ENCODE measurements at regions of chr5 and their contacts with region 1.

Region 1: DNA sequence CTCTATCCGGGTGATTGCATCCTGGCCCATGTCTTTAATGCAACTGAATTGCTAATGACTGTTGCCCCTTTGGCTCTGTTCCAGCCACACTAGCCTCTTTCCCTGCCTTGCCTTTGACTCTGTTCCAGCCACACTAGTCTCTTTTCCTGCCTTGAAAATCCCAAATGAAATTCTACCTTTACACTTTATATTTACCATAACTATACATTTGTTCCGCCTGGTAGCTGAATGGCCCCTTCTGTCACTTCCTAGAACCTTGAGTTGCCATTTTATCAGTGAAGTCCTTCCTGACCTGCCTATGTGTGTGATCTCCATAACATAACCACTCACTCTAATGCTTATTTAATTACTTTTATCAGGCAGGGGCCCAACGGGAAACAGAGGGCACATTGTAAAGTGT is 1120.4 kb upstream of the WWC1 start:
- DNase-seq: no peak
- ATAC-seq: no peak
- H3K4me3 ChIP-seq: no peak overlapping the region
- H3K4me3 Mint-ChIP-seq: no peak overlapping the region
- H3K27ac ChIP-seq: no peak overlapping the region
- H3K27ac Mint-ChIP-seq: no peak overlapping the region
- H3K4me1 ChIP-seq: no peaks in the 10 kb centered on the region
- H3K4me1 Mint-ChIP-seq: no peaks in the 10 kb centered on the region
- H3K27me3 ChIP-seq: no peaks in the 10 kb centered on the region
- H3K27me3 Mint-ChIP-seq: no peaks in the 10 kb centered on the region
- CTCF ChIP-seq: no peak

Region 2: GRCh38 chr5:165349735-165350134 is 1821.3 kb before region 1 on chr5:
- CTCF ChIA-PET with region 1: no interaction called
- POLR2A ChIA-PET with region 1: no interaction called
- intact Hi-C with region 1: loop called in 1 of 2 experiments (anchors 5 kb)
- DNase-seq: no peak
- ATAC-seq: no peak
- H3K4me3 ChIP-seq: no peak overlapping the region
- H3K4me3 Mint-ChIP-seq: no peak overlapping the region
- H3K27ac ChIP-seq: no peak overlapping the region
- H3K27ac Mint-ChIP-seq: no peak overlapping the region
- H3K4me1 ChIP-seq: no peaks in the 10 kb centered on the region
- H3K4me1 Mint-ChIP-seq: no peaks in the 10 kb centered on the region
- H3K27me3 ChIP-seq: no peaks in the 10 kb centered on the region
- H3K27me3 Mint-ChIP-seq: no peaks in the 10 kb centered on the region
- CTCF ChIP-seq: no peak

Region 3: DNA sequence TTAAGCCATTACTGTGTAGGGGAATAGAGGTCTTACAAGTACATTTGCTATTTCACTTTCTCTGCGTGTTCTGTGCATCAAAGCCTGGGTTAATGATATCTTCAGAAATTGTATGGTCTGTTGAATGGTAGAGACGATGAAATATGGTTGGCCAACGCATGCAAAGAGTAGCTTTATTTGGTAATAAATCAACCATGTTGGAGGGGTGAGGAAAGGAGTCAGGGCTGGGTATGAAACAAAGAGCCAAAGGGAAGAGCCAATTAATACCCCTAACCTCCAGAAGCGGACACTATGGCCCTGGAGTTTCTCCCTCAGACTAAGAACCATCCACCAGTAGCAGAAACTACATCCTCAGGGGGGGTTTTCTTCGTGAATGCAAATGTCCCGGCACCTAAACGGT is 853.6 kb before region 1 on chr5:
- CTCF ChIA-PET with region 1: no interaction called
- POLR2A ChIA-PET with region 1: no interaction called
- intact Hi-C with region 1: no loop called
- DNase-seq: no peak
- ATAC-seq: no peak
- H3K4me3 ChIP-seq: no peak overlapping the region
- H3K4me3 Mint-ChIP-seq: no peak overlapping the region
- H3K27ac ChIP-seq: no peak overlapping the region
- H3K27ac Mint-ChIP-seq: no peak overlapping the region
- H3K4me1 ChIP-seq: no peaks in the 10 kb centered on the region
- H3K4me1 Mint-ChIP-seq: no peaks in the 10 kb centered on the region
- H3K27me3 ChIP-seq: no peaks in the 10 kb centered on the region
- H3K27me3 Mint-ChIP-seq: no peaks in the 10 kb centered on the region
- CTCF ChIP-seq: no peak

Region 4: DNA sequence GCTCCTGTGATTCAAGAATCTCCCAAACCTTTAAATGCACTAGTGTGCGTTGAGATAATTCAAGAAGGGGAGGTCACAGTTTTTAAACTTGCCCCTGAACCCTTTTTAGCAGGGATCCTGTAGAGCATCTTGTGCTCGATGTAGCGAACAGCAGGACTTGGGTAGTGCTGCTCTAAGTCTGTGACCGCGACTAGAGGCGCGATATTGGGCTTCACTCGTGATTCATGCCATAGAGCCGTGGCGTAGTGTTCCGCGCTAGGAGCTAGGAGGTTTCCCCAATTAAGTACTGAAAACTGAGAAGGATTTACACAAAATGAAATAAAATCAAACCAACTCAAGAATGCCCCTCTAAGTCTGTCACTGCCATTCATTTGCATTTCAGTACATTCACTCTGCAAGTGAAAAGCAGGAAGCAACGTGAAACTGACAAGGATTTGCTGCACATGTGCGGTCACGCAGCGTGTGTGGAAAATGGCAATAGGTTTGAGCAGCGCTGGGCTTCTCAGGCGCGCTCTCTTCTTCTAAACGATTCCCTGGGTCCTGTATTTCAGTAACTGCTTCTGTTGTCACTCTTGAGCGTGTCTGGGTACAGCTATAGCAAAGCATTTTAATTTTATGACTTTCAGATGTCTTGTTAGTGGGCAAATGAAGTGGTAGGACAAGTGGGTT is 15.5 kb before region 1 on chr5:
- CTCF ChIA-PET with region 1: no interaction called
- POLR2A ChIA-PET with region 1: no interaction called
- intact Hi-C with region 1: no loop called
- DNase-seq: no peak
- ATAC-seq: no peak
- H3K4me3 ChIP-seq: no peak overlapping the region
- H3K4me3 Mint-ChIP-seq: no peak overlapping the region
- H3K27ac ChIP-seq: no peak overlapping the region
- H3K27ac Mint-ChIP-seq: no peak overlapping the region
- H3K4me1 ChIP-seq: no peaks in the 10 kb centered on the region
- H3K4me1 Mint-ChIP-seq: no peaks in the 10 kb centered on the region
- H3K27me3 ChIP-seq: no peaks in the 10 kb centered on the region
- H3K27me3 Mint-ChIP-seq: no peaks in the 10 kb centered on the region
- CTCF ChIP-seq: no peak

Measured in CD8-positive, alpha-beta T cell (primary cell).